Gastrocnemius medialis (tissue), 4 donors: ENCODE measurements at regions of chr2 and their contacts with region 1.

Region 1: GRCh38 chr2:47323009-47323821 is 79.7 kb upstream of the MSH2 start:
- DNase-seq: peak; percentile 43 to 57
- ATAC-seq: peak; percentile 91
- H3K4me3 ChIP-seq: no peak overlapping the region
- H3K27ac ChIP-seq: no peak overlapping the region
- H3K4me1 ChIP-seq: peaks cover 3 to 4% of the 10 kb centered on the region in 2 donors
- H3K27me3 ChIP-seq: no peaks in the 10 kb centered on the region
- CTCF ChIP-seq: peak; percentile 96 to 99 (median 98)
- POLR2A ChIP-seq: no peak

Region 2: GRCh38 chr2:46988733-46989481 is 334.3 kb before region 1 on chr2:
- in situ Hi-C with region 1: loop called in 3 of 4 experiments (anchors 5 to 10 kb)
- intact Hi-C with region 1: no loop called
- DNase-seq: no peak
- ATAC-seq: peak in 1 of 2 donors; percentile 13
- H3K4me3 ChIP-seq: no peak overlapping the region
- H3K27ac ChIP-seq: peak overlapping the region in 3 of 4 donors; percentile 27 to 65 (median 61)
- H3K4me1 ChIP-seq: peaks cover 42 to 47% of the 10 kb centered on the region in 2 donors
- H3K27me3 ChIP-seq: no peaks in the 10 kb centered on the region
- CTCF ChIP-seq: no peak
- POLR2A ChIP-seq: no peak

Region 3: DNA sequence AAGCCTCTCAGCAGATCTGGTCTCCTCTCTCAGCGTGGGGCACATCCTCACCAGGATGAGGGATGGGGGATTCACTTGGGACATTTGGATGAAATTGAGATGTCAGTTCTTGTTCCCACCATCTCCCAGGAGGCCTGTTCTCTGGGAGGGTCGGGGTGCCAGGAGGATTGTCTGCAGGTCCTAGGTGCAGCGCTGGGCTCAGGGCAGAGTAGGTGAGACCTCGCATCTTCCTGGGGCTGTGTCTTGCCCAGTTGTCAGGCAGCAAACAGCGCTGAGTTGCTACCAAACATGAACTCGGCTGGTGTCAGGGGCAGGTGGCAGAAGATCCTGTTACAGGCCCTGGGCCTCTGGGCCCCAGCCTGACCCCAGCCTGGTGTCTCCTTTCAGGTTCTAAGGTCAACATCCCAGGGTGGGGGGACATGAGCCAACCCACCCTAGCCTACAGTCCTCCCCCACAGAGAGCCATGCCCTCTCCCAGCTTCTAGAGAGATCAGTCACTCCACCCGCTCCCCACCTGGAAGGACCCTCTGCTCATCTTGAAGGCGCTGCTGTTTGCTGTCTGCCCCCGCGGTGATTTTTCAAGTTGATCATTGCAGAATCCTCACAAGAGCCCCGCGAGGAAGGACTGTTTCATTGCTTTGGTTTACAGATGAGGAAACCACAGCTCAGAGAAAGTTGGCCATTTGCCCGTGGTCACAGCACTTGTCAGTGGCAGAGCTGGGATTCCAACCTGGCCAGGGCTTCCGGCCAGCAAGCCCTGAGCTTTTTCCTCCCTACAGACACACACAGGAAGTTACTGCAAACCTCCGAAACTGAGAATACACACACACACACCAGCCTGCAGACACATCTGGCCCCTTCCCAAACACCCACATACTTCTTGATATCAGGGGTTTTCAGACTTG is 252.0 kb before region 1 on chr2:
- in situ Hi-C with region 1: no loop called
- intact Hi-C with region 1: loop called (anchors 10 kb)
- DNase-seq: peak; percentile 61 to 83
- ATAC-seq: peak in 1 of 2 donors; percentile 55
- H3K4me3 ChIP-seq: no peak overlapping the region
- H3K27ac ChIP-seq: peak overlapping the region; percentile 78 to 84 (median 79)
- H3K4me1 ChIP-seq: peaks cover 61 to 63% of the 10 kb centered on the region in 2 donors
- H3K27me3 ChIP-seq: no peaks in the 10 kb centered on the region
- CTCF ChIP-seq: no peak
- POLR2A ChIP-seq: peak in 1 of 2 donors; percentile 10

Region 4: GRCh38 chr2:47165001-47165555 is 158.1 kb before region 1 on chr2:
- in situ Hi-C with region 1: no loop called
- intact Hi-C with region 1: no loop called
- DNase-seq: no peak
- ATAC-seq: peak; percentile 60 to 89
- H3K4me3 ChIP-seq: no peak overlapping the region
- H3K27ac ChIP-seq: peak overlapping the region; percentile 32 to 99 (median 52)
- H3K4me1 ChIP-seq: peaks cover 55 to 58% of the 10 kb centered on the region in 2 donors
- H3K27me3 ChIP-seq: no peaks in the 10 kb centered on the region
- CTCF ChIP-seq: no peak
- POLR2A ChIP-seq: no peak

Region 5: DNA sequence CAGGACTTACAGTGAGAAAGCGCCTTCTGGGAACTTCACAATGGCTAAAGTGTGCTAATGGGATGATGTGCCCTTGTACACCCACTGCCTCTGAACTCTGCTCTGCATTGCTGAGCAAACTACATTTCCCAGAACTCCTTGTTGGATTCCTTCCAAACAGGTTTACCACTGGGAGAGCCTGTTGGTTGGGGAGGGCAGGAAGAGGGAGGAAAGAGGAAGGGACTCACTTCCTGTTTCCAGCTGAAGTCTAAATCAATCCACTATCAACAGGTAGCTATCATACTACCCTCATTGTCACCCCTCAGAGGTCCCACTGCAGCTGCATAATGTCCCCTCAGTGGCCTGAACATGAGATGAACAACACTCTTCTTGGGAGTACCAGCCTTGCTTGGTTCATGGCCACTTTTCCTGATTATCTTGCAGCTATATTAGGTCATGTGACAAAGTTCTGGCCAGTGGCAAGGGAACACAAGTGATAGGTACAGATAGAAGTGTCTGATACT is 189.4 kb after region 1 on chr2:
- in situ Hi-C with region 1: no loop called
- intact Hi-C with region 1: no loop called
- DNase-seq: no peak
- ATAC-seq: no peak
- H3K4me3 ChIP-seq: no peak overlapping the region
- H3K27ac ChIP-seq: no peak overlapping the region
- H3K4me1 ChIP-seq: no peaks in the 10 kb centered on the region
- H3K27me3 ChIP-seq: no peaks in the 10 kb centered on the region
- CTCF ChIP-seq: no peak
- POLR2A ChIP-seq: no peak